Motor neuron (in vitro differentiated cells): ENCODE measurements at regions of chr1 and their contacts with region 1.

Region 1: DNA sequence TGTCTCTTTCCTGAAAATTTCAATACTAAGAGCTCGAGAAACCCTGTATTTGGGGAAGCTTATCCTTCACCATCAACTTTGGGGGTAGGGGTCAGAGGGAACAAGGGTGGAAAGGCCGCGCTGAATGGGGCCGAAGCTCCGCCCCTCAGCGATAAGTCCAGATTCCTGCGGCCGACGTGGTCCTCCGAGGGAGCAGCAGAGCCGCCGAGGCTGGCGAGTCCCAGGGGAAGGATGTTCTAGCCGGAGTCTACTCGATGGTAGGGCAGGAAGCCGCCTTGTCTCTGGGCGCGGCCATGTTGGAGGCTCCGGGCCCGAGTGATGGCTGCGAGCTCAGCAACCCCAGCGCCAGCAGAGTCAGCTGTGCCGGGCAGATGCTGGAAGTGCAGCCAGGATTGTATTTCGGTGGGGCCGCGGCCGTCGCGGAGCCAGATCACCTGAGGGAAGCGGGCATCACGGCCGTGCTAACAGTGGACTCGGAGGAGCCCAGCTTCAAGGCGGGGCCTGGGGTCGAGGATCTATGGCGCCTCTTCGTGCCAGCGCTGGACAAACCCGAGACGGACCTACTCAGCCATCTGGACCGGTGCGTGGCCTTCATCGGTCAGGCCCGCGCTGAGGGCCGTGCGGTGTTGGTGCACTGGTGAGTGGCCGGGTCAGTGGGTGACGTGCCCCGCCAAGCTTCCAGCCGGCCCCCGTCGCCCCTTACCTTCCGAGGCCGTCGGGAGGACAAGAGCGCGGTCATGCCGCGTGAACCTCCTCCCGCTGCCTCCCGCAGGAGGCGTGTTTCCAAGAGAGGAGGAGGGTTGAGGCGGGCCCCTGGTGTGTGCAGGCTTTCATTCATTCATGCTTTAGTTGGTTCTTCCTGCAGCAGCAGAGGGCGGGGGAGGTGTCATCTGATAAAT is at the start of gene DUSP12:
- ATAC-seq: peak; percentile 90 to 96 (median 93)
- H3K4me3 ChIP-seq: peak within 1 kb of the TSS; percentile 80 to 96 (median 90)
- H3K27ac ChIP-seq: peak within 1 kb of the TSS; percentile 95 to 97
- H3K4me1 ChIP-seq: peaks cover 11 to 17% of the 10 kb centered on the region in 2 donors
- total RNA-seq, gene DUSP12: 22.8 to 100 (median 66.8) TPM

Region 2: GRCh38 chr1:161045750-161046571 is 703.8 kb before region 1 on chr1 and contains the start of gene USF1:
- in situ Hi-C with region 1: no loop called
- ATAC-seq: peak; percentile 80 to 87 (median 85)
- H3K4me3 ChIP-seq: peak within 1 kb of the TSS; percentile 61 to 81 (median 62)
- H3K27ac ChIP-seq: peak within 1 kb of the TSS; percentile 98 to 99
- H3K4me1 ChIP-seq: peaks cover 9 to 15% of the 10 kb centered on the region in 2 donors
- total RNA-seq, gene USF1: 60.3 to 156 (median 85.6) TPM

Region 3: GRCh38 chr1:161631076-161631475 is 118.7 kb before region 1 on chr1 and contains the start of gene FCGR3B:
- in situ Hi-C with region 1: loop called in 2 of 9 experiments (anchors 25 kb)
- ATAC-seq: no peak
- H3K4me3 ChIP-seq: no peak within 1 kb of the TSS
- H3K27ac ChIP-seq: no peak within 1 kb of the TSS
- H3K4me1 ChIP-seq: no peaks in the 10 kb centered on the region
- total RNA-seq, gene FCGR3B: 0.14 to 1.7 (median 0.37) TPM in 4 of 8 experiments, not detected in the others